Activated T-helper 1 cell treated with anti-CD3 and anti-CD28 coated beads, Interleukin-12 subunit alpha, Interleukin-12 subunit beta, Interleukin-2, Interleukin-4 antibody, amounts not matched to agents 30 ng/mL and 10 ng/mL and 1 ng/mL, durations not matched to agents 14 hours and 24 hours and 36 hours (primary cell): ENCODE measurements at regions of chr17 and their contacts with region 1.

Region 1: DNA sequence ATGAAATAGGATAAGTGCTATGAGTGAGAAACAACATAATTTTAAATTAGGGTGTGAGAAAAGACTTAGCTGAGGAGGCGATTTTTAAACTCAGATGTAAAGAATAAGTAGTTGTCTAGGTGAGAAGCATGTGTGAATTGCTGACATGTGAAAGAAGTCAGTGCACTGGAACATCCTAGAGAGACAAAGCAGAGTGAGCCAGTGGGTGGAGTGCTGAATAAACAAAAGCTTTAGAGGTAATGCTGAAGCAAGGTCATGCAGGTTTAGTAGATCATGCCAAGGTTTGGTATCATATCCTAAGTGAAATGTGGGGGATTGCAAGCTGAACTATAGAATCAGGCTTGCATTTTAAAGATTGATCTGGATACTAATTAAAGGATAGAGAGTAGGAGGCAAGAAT is 89.4 kb downstream of the KIF2B start:
- DNase-seq: no peak
- H3K4me3 Mint-ChIP-seq: no peak overlapping the region
- H3K27ac Mint-ChIP-seq: no peak overlapping the region
- H3K4me1 Mint-ChIP-seq: no peaks in the 10 kb centered on the region
- H3K27me3 Mint-ChIP-seq: no peaks in the 10 kb centered on the region

Region 2: DNA sequence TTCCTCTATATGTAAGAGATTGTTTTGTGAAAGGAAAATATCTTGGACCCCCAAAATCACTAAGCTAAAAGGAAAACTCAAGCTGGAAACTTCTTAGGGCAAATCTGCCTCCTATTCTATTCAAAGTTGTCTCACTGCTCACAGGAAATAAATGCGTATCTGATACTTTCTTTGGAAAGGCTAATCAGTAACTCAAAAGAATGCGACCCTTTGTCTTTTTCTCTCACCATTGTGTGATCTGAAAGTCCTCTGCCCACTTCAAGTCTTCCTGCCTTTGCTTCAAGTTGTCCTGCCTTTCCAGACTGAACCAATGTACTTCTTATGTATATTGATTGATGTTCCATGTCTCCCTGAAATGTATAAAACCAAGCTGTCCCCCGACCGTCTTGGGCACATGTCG is 67.9 kb after region 1 on chr17:
- intact Hi-C with region 1: loop called (anchors 10 kb)
- DNase-seq: no peak
- H3K4me3 Mint-ChIP-seq: no peak overlapping the region
- H3K27ac Mint-ChIP-seq: no peak overlapping the region
- H3K4me1 Mint-ChIP-seq: no peaks in the 10 kb centered on the region
- H3K27me3 Mint-ChIP-seq: no peaks in the 10 kb centered on the region